H1 (cell line): ENCODE measurements at regions of chr19 and their contacts with region 1.

Region 1: DNA sequence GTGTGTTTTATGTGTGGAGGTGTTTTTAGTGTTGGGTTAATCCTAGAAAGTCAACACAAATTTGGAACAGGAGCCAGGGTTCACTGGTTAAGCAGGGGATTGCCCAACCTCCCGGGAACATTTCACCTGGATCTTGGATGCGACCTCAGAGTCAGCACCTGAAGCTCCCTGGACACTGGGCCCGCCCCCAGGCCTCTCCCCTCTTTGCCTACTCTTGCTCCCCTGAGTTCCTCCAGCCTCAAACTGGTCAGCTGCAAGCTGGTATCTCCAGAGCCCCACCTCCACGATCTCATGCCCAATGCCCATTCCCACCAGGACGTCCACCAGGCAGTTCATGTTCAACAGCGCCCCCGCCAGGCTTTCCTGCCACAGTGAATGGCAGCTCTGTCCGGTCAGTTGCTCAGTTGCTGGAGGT is 9.7 kb downstream of the HSD17B14 start:
- DNase-seq: peak in 1 of 2 experiments; percentile 85
- H3K4me3 ChIP-seq: no peak overlapping the region
- H3K27ac ChIP-seq: no peak overlapping the region
- H3K4me1 ChIP-seq: no peaks in the 10 kb centered on the region
- H3K27me3 ChIP-seq: no peaks in the 10 kb centered on the region
- CTCF ChIP-seq: peak; percentile 74 to 83 (median 83)
- EP300 ChIP-seq: no peak
- POLR2A ChIP-seq: no peak
- RAD21 ChIP-seq: peak; percentile 63 to 68

Region 2: GRCh38 chr19:48468775-48469288 is 357.8 kb before region 1 on chr19:
- CTCF ChIA-PET with region 1: no interaction called
- POLR2A ChIA-PET with region 1: no interaction called
- DNase-seq: peak; percentile 97 to 100
- H3K4me3 ChIP-seq: peak overlapping the region; percentile 62 to 84 (median 80)
- H3K27ac ChIP-seq: peak overlapping the region; percentile 90
- H3K4me1 ChIP-seq: peaks cover 0 to 9% (median 1%) of the 10 kb centered on the region in 4 experiments; a peak in 3 of 7 replicates
- H3K27me3 ChIP-seq: no peaks in the 10 kb centered on the region
- CTCF ChIP-seq: no peak
- EP300 ChIP-seq: no peak
- POLR2A ChIP-seq: no peak
- RAD21 ChIP-seq: no peak

Region 3: GRCh38 chr19:48806818-48807589 is 19.6 kb before region 1 on chr19:
- CTCF ChIA-PET with region 1: interaction called, 111 read pairs
- POLR2A ChIA-PET with region 1: interaction called, 6 read pairs
- DNase-seq: peak in 1 of 2 experiments; percentile 55
- H3K4me3 ChIP-seq: peak overlapping the region in 1 of 4 experiments; percentile 3; a peak in 1 of 8 replicates
- H3K27ac ChIP-seq: peak overlapping the region; percentile 36; the same call in 1 of the 2 replicates
- H3K4me1 ChIP-seq: peaks cover 0 to 19% (median 13%) of the 10 kb centered on the region in 4 experiments; a peak in 6 of 7 replicates
- H3K27me3 ChIP-seq: peaks cover 0 to 11% (median 0%) of the 10 kb centered on the region in 4 experiments; a peak in 3 of 7 replicates
- CTCF ChIP-seq: no peak
- EP300 ChIP-seq: no peak
- POLR2A ChIP-seq: no peak
- RAD21 ChIP-seq: no peak

Region 4: GRCh38 chr19:48812094-48812929 is 14.3 kb before region 1 on chr19:
- CTCF ChIA-PET with region 1: interaction called, 111 read pairs
- POLR2A ChIA-PET with region 1: interaction called, 6 read pairs
- DNase-seq: peak in 1 of 2 experiments; percentile 89
- H3K4me3 ChIP-seq: peak overlapping the region in 3 of 4 experiments; percentile 3 to 52 (median 26); a peak in 5 of 8 replicates
- H3K27ac ChIP-seq: peak overlapping the region; percentile 71; the same call in 1 of the 2 replicates
- H3K4me1 ChIP-seq: peaks cover 3 to 15% (median 10%) of the 10 kb centered on the region in 4 experiments
- H3K27me3 ChIP-seq: peaks cover 0 to 11% (median 0%) of the 10 kb centered on the region in 4 experiments; a peak in 3 of 7 replicates
- CTCF ChIP-seq: peak in 2 of 3 experiments; percentile 13 to 20; a peak in 2 of 4 replicates
- EP300 ChIP-seq: peak in 1 of 2 experiments; percentile 94; a peak in 1 of 3 replicates
- POLR2A ChIP-seq: 0 out of 3 replicates have a peak, but pooled peaks of 1 of the 2 experiments have one; percentile 28
- RAD21 ChIP-seq: no peak; a peak in 1 of 4 replicates

Region 5: DNA sequence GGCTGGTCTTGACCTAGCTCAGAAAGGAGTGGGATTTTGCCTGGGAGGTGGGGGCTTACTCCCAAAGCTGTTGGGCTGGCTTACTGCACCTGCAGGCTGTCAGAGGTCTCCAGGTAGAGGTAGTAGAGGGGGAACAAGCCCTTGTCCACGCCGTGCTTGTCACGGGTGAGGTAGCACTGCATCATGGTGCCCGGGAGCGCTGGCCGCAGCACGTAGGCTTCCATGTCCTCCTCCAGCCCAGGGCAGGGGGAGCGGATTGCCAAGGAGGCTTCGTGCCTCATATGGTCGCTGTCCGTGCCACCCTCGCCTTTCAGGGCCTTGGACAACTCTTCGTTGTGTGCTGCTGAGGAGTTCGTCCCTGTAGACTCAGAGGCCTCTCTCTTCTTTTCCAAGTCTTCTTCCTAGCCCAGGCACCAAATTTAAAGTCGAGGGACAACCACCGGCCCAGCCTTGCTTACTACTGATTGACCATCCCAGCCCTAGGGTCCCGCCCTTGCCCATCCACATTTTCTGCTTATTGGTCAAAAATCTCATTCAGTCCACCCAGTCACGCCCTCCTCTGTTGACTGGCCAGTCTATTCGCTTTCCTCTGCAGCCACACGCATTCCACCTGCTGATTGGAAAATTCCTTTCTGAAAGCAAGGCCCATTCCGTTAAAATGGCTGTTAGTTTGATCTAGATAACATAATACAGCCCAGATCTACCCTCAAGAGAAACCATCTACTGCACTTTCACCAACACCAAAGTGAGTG is 61.4 kb after region 1 on chr19:
- CTCF ChIA-PET with region 1: no interaction called
- POLR2A ChIA-PET with region 1: no interaction called
- DNase-seq: no peak
- H3K4me3 ChIP-seq: no peak overlapping the region
- H3K27ac ChIP-seq: no peak overlapping the region
- H3K4me1 ChIP-seq: peaks cover 0 to 3% (median 0%) of the 10 kb centered on the region in 4 experiments; a peak in 1 of 7 replicates
- H3K27me3 ChIP-seq: no peaks in the 10 kb centered on the region
- CTCF ChIP-seq: no peak
- EP300 ChIP-seq: no peak
- POLR2A ChIP-seq: no peak
- RAD21 ChIP-seq: no peak